Activated T-helper 1 cell treated with anti-CD3 and anti-CD28 coated beads, Interleukin-12 subunit alpha, Interleukin-12 subunit beta, Interleukin-2, Interleukin-4 antibody, amounts not matched to agents 30 ng/mL and 10 ng/mL and 1 ng/mL, durations not matched to agents 14 hours and 24 hours and 36 hours (primary cell): ENCODE measurements at regions of chr17 and their contacts with region 1.

Region 1: GRCh38 chr17:27601069-27601975 is 29.7 kb upstream of the LGALS9 start:
- DNase-seq: peak; percentile 68
- H3K4me3 Mint-ChIP-seq: no peak overlapping the region
- H3K27ac Mint-ChIP-seq: no peak overlapping the region
- H3K4me1 Mint-ChIP-seq: peaks cover 30% of the 10 kb centered on the region
- H3K27me3 Mint-ChIP-seq: no peaks in the 10 kb centered on the region

Region 2: DNA sequence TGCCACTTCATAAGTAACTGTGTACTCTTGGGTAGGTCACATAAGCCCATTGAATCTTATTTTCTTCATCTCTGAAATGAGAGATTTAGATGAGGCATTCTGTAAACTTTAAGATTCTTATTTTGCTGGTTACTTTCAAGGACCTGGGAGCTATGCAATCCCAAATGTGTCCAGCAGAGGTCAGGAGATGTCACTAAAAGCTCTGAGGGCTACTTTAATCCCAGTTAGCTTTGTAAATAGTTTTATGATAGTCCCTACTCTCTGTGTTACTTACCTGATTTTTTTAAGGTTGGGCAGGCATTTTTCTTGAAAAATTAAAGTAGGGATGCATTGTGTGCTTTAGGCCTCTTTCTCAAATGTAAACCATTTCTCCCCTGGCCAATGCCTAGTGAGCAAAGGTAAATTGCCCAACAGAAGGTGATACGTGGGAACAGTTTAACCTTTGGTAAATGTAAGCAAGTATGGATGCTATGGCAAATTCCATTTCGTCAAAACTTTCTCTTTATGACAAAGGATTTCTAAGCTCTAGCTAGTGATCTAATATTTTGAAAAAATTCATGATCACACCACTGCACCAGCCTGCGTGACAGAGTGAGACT is 364.5 kb before region 1 on chr17:
- intact Hi-C with region 1: loop called (anchors 1 kb)
- DNase-seq: peak; percentile 51
- H3K4me3 Mint-ChIP-seq: no peak overlapping the region
- H3K27ac Mint-ChIP-seq: no peak overlapping the region
- H3K4me1 Mint-ChIP-seq: peaks cover 21% of the 10 kb centered on the region
- H3K27me3 Mint-ChIP-seq: peaks cover 22% of the 10 kb centered on the region

Region 3: DNA sequence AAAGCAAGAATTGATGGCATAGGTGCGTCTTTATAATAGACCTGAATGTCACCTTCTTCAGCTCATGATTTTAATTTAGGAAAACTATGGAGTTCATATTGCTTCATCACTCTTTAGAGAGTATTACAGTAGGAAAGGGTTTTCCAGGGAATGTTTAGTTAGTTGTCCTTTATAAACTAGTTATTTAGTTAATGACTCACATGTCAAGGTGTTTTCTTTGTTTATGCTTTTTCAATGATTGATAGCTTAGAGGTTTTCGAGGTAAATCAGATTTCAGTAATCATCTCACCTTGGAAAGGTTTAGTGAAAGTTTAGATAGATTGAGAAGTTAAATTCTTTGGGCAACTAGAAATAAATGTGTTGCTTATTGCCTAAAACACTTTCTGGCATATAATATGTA is 297.6 kb before region 1 on chr17:
- intact Hi-C with region 1: no loop called
- DNase-seq: no peak
- H3K4me3 Mint-ChIP-seq: no peak overlapping the region
- H3K27ac Mint-ChIP-seq: no peak overlapping the region
- H3K4me1 Mint-ChIP-seq: peaks cover 35% of the 10 kb centered on the region
- H3K27me3 Mint-ChIP-seq: no peaks in the 10 kb centered on the region

Region 4: DNA sequence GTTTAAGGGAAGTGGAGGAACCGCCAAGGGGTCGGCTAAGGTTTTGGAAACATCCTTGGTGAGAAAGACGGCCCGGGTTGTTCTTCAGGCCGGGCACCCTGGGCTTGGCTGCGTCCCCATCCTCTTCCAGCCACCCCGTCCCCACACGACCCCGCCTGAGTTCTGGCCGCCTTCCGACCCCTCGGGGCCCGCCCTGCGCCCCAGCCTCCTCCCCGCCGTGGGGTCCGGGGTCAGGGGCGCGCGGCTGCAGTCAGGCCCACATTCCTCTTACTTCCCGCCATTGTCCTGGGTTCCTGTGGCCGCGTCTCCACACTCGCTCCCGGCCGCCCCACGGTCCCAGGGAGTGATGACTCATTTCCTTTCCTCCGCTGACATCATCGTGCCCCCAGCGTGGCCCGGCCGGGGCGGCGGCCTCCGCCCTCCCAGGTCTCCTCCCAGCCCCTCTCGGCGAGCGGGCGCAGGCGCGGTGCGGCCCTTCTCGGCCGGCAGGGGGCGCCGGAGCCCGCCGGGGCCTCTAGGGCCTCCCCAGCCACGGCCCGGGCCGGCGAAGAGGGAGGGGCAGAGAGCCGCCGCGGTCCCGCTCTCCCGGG is 247.8 kb before region 1 on chr17:
- intact Hi-C with region 1: loop called (anchors 1 kb)
- DNase-seq: peak; percentile 86
- H3K4me3 Mint-ChIP-seq: peak overlapping the region; percentile 82
- H3K27ac Mint-ChIP-seq: peak overlapping the region; percentile 95
- H3K4me1 Mint-ChIP-seq: peaks cover 45% of the 10 kb centered on the region
- H3K27me3 Mint-ChIP-seq: no peaks in the 10 kb centered on the region

Region 5: DNA sequence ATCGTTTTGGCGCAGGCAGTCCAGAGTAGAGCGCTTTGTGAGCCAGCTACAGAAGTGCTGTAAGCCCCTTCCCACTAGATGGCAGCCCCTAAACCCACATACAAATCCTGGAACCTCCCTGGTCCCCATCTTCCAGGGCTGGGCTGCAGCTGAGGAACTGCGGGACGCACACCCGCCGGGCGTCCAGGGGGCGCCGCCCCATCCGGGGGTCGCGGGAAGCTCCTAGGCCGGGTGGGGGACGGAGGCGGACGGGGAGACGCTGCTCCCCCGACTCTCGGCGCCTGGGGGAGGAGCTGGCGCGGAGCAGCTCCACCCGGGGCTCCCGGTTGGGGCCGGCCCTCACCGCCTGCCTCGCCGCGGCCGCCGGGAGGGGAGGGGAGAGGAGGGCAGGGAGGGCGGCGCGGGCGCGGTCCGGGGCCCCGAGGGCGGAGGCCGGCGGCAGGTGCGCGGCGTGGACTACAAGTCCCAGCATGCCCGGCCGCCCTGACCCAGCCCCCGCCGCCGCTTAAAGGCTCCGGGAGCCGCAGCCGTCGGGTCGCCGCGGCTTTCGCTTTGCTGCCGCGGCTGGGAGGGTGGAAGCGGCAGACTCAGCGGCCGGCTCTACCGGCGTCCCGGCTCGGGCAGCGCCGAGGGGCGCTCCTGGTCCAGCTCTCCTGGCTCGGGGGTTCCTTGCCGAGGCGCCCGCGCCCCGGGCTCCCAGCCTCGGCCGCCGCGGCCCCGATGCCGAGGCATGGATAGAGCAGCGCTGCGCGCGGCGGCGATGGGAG is 145.2 kb before region 1 on chr17 and contains the start of gene KSR1:
- intact Hi-C with region 1: loop called (anchors 1 kb)
- DNase-seq: peak; percentile 81
- H3K4me3 Mint-ChIP-seq: peak within 1 kb of the TSS; percentile 99
- H3K27ac Mint-ChIP-seq: peak within 1 kb of the TSS; percentile 94
- H3K4me1 Mint-ChIP-seq: peaks cover 52% of the 10 kb centered on the region
- H3K27me3 Mint-ChIP-seq: peaks cover 3% of the 10 kb centered on the region
- total RNA-seq, gene KSR1: 119 and 122 TPM in 2 replicates

Region 6: GRCh38 chr17:27544350-27545131 is 56.8 kb before region 1 on chr17:
- intact Hi-C with region 1: loop called (anchors 1 kb)
- DNase-seq: peak; percentile 66
- H3K4me3 Mint-ChIP-seq: peak overlapping the region; percentile 61
- H3K27ac Mint-ChIP-seq: peak overlapping the region; percentile 97
- H3K4me1 Mint-ChIP-seq: peaks cover 84% of the 10 kb centered on the region
- H3K27me3 Mint-ChIP-seq: peaks cover 2% of the 10 kb centered on the region

Region 7: DNA sequence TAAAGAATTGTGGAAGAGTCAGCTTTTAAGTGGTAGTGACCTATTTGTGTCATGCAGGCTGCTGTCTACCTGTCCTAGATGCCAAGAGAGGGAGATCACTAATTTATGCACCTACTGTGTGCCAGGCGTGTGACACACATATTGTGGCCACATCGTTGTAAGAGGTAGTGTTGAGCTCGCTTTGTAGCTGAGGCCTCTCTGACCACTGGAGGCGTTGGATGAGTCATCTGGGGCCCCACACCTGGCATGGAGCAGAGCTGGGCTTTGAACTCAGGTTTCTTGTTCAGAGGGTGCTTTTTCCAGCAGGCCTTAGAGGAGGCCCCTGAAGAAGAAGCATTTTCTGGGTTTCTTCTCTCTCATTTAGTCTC is 22.6 kb before region 1 on chr17:
- intact Hi-C with region 1: loop called (anchors 1 kb)
- DNase-seq: peak; percentile 62
- H3K4me3 Mint-ChIP-seq: peak overlapping the region; percentile 3
- H3K27ac Mint-ChIP-seq: peak overlapping the region; percentile 90
- H3K4me1 Mint-ChIP-seq: peaks cover 77% of the 10 kb centered on the region
- H3K27me3 Mint-ChIP-seq: no peaks in the 10 kb centered on the region

Region 8: GRCh38 chr17:27760069-27760885 is 159.0 kb after region 1 on chr17:
- intact Hi-C with region 1: loop called (anchors 1 kb)
- DNase-seq: peak; percentile 48
- H3K4me3 Mint-ChIP-seq: no peak overlapping the region
- H3K27ac Mint-ChIP-seq: no peak overlapping the region
- H3K4me1 Mint-ChIP-seq: no peaks in the 10 kb centered on the region
- H3K27me3 Mint-ChIP-seq: no peaks in the 10 kb centered on the region